ENCODE measurements at regions of chr2 and their contacts with region 1.

Region 1: GRCh38 chr2:63692002-63692606 is 103.3 kb downstream of the MDH1 start:
- DNase-seq: peak; percentile 78
- H3K4me3 ChIP-seq: no peak overlapping the region
- H3K27ac ChIP-seq: no peak overlapping the region
- H3K4me1 ChIP-seq: no peaks in the 10 kb centered on the region
- H3K27me3 ChIP-seq: no peaks in the 10 kb centered on the region
- CTCF ChIP-seq: peak; percentile 17 to 19
- POLR2A ChIP-seq: no peak

Region 2: DNA sequence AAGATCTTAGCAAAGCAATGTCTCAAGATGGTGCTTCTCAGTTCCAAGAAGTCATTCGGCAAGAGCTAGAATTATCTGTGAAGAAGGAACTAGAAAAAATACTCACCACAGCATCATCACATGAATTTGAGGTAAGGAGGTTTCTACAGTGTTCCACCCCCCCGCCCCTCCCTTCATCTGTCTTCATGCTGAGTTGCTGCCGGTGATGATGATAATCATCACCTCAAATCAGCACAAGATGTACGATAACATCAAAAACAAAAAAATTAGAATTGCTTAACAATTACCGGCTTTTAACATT is 164.1 kb after region 1 on chr2:
- CTCF ChIA-PET with region 1: interaction called, 178 read pairs
- POLR2A ChIA-PET with region 1: no interaction called
- dilution Hi-C with region 1: no loop called
- intact Hi-C with region 1: loop called (anchors 1 kb)
- DNase-seq: no peak
- H3K4me3 ChIP-seq: no peak overlapping the region
- H3K27ac ChIP-seq: no peak overlapping the region
- H3K4me1 ChIP-seq: no peaks in the 10 kb centered on the region
- H3K27me3 ChIP-seq: no peaks in the 10 kb centered on the region
- CTCF ChIP-seq: no peak
- POLR2A ChIP-seq: no peak

Region 3: DNA sequence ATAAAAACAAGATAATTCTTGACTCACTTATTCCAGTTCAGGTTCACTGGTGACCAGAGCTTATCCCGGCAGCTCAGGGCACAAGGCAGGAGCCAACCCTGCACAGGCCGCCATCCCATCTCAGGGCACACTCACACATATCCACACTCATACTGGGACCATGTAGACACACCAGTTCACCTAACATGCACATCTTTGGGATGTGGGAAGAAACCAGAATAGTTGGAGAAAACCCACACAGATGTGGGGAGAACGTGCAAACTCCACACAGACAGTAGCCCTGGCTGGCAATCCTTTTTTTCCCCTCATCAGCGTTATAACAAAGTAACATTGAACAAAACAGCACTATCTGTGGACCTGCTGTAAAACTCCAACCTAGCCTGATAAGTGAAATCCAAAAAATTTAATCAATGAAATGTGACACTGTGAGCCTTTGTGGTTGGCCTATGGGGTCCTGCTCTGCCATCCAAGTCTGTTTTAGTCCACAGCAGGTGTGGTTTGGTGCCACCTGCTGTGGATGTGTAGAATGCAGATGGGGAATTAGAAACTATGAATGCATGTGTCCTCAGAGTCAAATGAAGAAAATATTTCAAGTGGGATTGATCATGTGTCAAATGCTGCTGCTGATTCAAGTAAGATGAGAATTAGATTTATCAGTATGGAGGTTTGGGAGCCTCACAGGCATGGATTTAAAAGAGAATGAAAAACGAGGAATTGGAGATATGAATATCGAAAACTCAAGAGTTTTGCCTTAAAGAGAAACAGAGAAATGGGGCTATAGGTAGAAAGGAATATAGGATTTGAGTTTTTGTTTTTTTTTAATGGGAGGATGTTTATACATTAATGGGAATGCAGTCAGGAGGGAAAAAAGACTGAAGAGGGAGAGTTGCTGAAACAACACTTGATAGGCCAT is 196.6 kb after region 1 on chr2:
- CTCF ChIA-PET with region 1: interaction called, 6 read pairs
- POLR2A ChIA-PET with region 1: no interaction called
- dilution Hi-C with region 1: no loop called
- intact Hi-C with region 1: loop called (anchors 1 kb)
- DNase-seq: peak; percentile 69
- H3K4me3 ChIP-seq: no peak overlapping the region
- H3K27ac ChIP-seq: no peak overlapping the region
- H3K4me1 ChIP-seq: no peaks in the 10 kb centered on the region
- H3K27me3 ChIP-seq: no peaks in the 10 kb centered on the region
- CTCF ChIP-seq: peak; percentile 55 to 68
- POLR2A ChIP-seq: no peak